Naive thymus-derived CD8-positive, alpha-beta T cell (primary cell): ENCODE measurements at regions of chr12 and their contacts with region 1.

Region 1: GRCh38 chr12:103901518-103902173 is 28.6 kb upstream of the HSP90B1 start:
- DNase-seq: peak; percentile 25 to 86 (median 70)
- ATAC-seq: peak; percentile 97 to 98
- H3K4me3 Mint-ChIP-seq: peak overlapping the region; percentile 67 to 90 (median 79)
- H3K27ac Mint-ChIP-seq: peak overlapping the region; percentile 90 to 98 (median 94)
- H3K4me1 Mint-ChIP-seq: peaks cover 36 to 72% (median 62%) of the 10 kb centered on the region in 4 donors
- H3K27me3 Mint-ChIP-seq: no peaks in the 10 kb centered on the region

Region 2: GRCh38 chr12:103840876-103841689 is 60.6 kb before region 1 on chr12 and contains the start of gene NT5DC3:
- POLR2A ChIA-PET with region 1: no interaction called
- DNase-seq: peak; percentile 72 to 90 (median 84)
- ATAC-seq: peak; percentile 88 to 90
- H3K4me3 Mint-ChIP-seq: peak within 1 kb of the TSS; percentile 83 to 93 (median 86)
- H3K27ac Mint-ChIP-seq: peak within 1 kb of the TSS; percentile 68 to 92 (median 81)
- H3K4me1 Mint-ChIP-seq: peaks cover 3 to 19% (median 14%) of the 10 kb centered on the region in 4 donors
- H3K27me3 Mint-ChIP-seq: peaks cover 0 to 1% (median 0%) of the 10 kb centered on the region in 5 donors
- polyA plus RNA-seq, gene NT5DC3: 0.33 to 0.89 (median 0.89) TPM

Region 3: GRCh38 chr12:103924761-103925641 is 23.4 kb after region 1 on chr12:
- POLR2A ChIA-PET with region 1: interaction called, 180 read pairs
- DNase-seq: peak in 1 of 10 donors; percentile 1
- ATAC-seq: no peak
- H3K4me3 Mint-ChIP-seq: no peak overlapping the region
- H3K27ac Mint-ChIP-seq: peak overlapping the region in 5 of 10 donors; percentile 27 to 75 (median 43)
- H3K4me1 Mint-ChIP-seq: peaks cover 7 to 31% (median 23%) of the 10 kb centered on the region in 4 donors
- H3K27me3 Mint-ChIP-seq: peaks cover 0 to 1% (median 0%) of the 10 kb centered on the region in 5 donors

Region 4: GRCh38 chr12:103956516-103957027 is 54.9 kb after region 1 on chr12:
- POLR2A ChIA-PET with region 1: interaction called, 10 read pairs
- DNase-seq: no peak
- ATAC-seq: peak; percentile 6 to 10
- H3K4me3 Mint-ChIP-seq: peak overlapping the region; percentile 98 to 100 (median 99)
- H3K27ac Mint-ChIP-seq: peak overlapping the region; percentile 95 to 100 (median 98)
- H3K4me1 Mint-ChIP-seq: peaks cover 17 to 46% (median 43%) of the 10 kb centered on the region in 4 donors
- H3K27me3 Mint-ChIP-seq: no peaks in the 10 kb centered on the region

Region 5: GRCh38 chr12:103965590-103966504 is 64.2 kb after region 1 on chr12 and contains the start of gene TDG:
- POLR2A ChIA-PET with region 1: interaction called, 17 read pairs
- DNase-seq: peak; percentile 86 to 99 (median 97)
- ATAC-seq: peak; percentile 93 to 94
- H3K4me3 Mint-ChIP-seq: peak within 1 kb of the TSS; percentile 96 to 99 (median 98)
- H3K27ac Mint-ChIP-seq: peak within 1 kb of the TSS; percentile 93 to 99 (median 99)
- H3K4me1 Mint-ChIP-seq: peaks cover 24 to 64% (median 60%) of the 10 kb centered on the region in 4 donors
- H3K27me3 Mint-ChIP-seq: no peaks in the 10 kb centered on the region
- polyA plus RNA-seq, gene TDG: 19.0 to 21.4 (median 20.0) TPM